ENCODE measurements at regions of chr12 and their contacts with region 1.

Region 1: GRCh38 chr12:29317556-29318363 is 63.2 kb downstream of the ERGIC2 start:
- DNase-seq: peak; percentile 84
- H3K4me3 ChIP-seq: no peak overlapping the region
- H3K27ac ChIP-seq: no peak overlapping the region
- H3K4me1 ChIP-seq: peaks cover 6% of the 10 kb centered on the region
- H3K27me3 ChIP-seq: no peaks in the 10 kb centered on the region
- CTCF ChIP-seq: peak; percentile 97

Region 2: GRCh38 chr12:29073628-29074239 is 244.0 kb before region 1 on chr12:
- CTCF ChIA-PET with region 1: interaction called, 9 read pairs
- POLR2A ChIA-PET with region 1: no interaction called
- intact Hi-C with region 1: loop called (anchors 5 kb)
- DNase-seq: peak; percentile 64
- H3K4me3 ChIP-seq: no peak overlapping the region
- H3K27ac ChIP-seq: no peak overlapping the region
- H3K4me1 ChIP-seq: no peaks in the 10 kb centered on the region
- H3K27me3 ChIP-seq: no peaks in the 10 kb centered on the region
- CTCF ChIP-seq: peak; percentile 73

Region 3: GRCh38 chr12:29088611-29089219 is 229.0 kb before region 1 on chr12:
- CTCF ChIA-PET with region 1: interaction called, 9 read pairs
- POLR2A ChIA-PET with region 1: no interaction called
- intact Hi-C with region 1: loop called (anchors 1 kb)
- DNase-seq: peak; percentile 57
- H3K4me3 ChIP-seq: no peak overlapping the region
- H3K27ac ChIP-seq: no peak overlapping the region
- H3K4me1 ChIP-seq: no peaks in the 10 kb centered on the region
- H3K27me3 ChIP-seq: no peaks in the 10 kb centered on the region
- CTCF ChIP-seq: peak; percentile 71